Ovary (tissue), 10 donors: ENCODE measurements at regions of chr13 and their contacts with region 1.

Region 1: DNA sequence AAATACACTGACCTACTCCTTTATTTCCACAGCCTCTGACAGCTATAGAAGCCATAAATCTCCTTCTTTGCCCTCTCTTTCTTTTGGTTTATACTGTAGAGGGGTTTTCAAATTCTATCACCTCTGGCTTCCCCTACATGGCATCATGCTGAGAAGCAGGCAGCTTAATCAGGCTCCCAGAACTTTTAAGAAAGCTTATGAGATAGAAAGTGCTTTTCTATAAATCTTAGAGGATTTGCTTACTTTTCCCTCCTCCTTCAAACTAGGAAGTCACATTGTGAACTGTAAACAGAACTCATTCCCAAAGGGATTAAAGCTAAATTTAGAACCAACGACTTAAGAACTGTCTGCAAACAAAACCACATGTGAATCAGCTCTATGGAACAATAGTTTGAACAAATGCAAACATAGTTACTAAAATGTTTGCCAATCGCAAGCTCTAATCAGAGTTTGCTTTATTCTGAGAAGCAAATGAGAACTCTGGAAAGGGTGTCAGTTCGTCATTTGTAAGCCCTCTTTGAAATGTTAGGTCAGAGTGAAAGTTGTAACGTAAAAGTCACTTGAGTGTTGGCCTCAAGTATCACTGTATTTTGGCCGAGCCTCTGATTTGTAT is 344.1 kb downstream of the RFC3 start:
- DNase-seq: no peak
- H3K4me3 ChIP-seq: no peak overlapping the region
- H3K27ac ChIP-seq: peak overlapping the region in 1 of 2 donors; percentile 1
- H3K4me1 ChIP-seq: peaks cover 5% of the 10 kb centered on the region
- H3K27me3 ChIP-seq: no peaks in the 10 kb centered on the region
- CTCF ChIP-seq: no peak
- EP300 ChIP-seq: no peak
- POLR2A ChIP-seq: no peak

Region 2: DNA sequence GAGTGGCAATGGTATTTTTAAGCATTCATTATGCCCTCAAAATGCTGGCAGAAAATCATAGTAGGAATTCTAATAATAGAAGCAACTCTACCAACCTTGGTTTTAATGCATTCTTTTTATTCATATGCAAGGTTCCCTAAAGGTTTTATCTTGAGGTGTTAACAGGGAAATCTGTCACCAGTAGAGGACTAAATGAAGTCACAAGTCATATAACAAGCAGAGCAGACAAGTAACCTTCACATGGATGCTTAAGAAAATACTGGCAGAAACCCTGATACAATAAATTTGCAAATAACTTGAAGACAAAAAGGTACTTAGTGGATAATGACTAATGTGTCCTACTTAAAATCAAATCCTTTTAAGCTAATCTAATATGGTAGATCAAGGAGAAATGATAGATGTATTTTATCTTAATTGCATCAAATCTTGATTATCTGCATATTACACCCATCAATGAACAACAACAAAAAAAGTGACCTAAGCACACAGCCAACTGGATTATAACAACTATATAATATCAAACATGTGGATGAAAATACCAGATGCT is 270.8 kb before region 1 on chr13:
- intact Hi-C with region 1: loop called in 1 of 4 experiments (anchors 5 kb)
- DNase-seq: no peak
- H3K4me3 ChIP-seq: no peak overlapping the region
- H3K27ac ChIP-seq: no peak overlapping the region
- H3K4me1 ChIP-seq: no peaks in the 10 kb centered on the region
- H3K27me3 ChIP-seq: no peaks in the 10 kb centered on the region
- CTCF ChIP-seq: no peak
- EP300 ChIP-seq: no peak
- POLR2A ChIP-seq: no peak

Region 3: DNA sequence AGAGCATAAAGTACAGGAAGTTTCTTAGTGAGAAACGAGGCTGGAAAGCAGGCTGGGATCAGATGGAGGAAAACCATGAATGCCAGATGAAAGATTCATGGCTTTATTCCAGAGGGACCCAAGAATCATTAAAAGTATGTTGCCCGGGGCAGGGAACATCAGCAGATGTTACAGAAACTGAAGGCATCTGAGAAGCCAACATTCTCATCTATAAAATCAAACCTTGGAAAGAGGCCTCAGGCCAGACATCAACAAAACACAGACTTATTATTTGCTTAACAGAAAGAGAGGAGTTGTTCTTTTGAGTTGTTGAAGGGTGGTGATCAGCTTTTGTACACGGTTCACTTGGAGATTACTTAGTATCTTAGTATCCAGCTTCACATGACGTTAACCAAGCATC is 199.5 kb after region 1 on chr13:
- intact Hi-C with region 1: no loop called
- DNase-seq: no peak
- H3K4me3 ChIP-seq: no peak overlapping the region
- H3K27ac ChIP-seq: no peak overlapping the region
- H3K4me1 ChIP-seq: no peaks in the 10 kb centered on the region
- H3K27me3 ChIP-seq: no peaks in the 10 kb centered on the region
- CTCF ChIP-seq: no peak
- EP300 ChIP-seq: no peak
- POLR2A ChIP-seq: no peak